ENCODE measurements at regions of chr4 and their contacts with region 1.

Region 1: GRCh38 chr4:142846729-142847596 is 862 bp upstream of the INPP4B start:
- DNase-seq: peak; percentile 78
- H3K4me3 ChIP-seq: peak overlapping the region; percentile 60
- H3K27ac ChIP-seq: no peak overlapping the region
- H3K4me1 ChIP-seq: no peaks in the 10 kb centered on the region
- H3K27me3 ChIP-seq: no peaks in the 10 kb centered on the region
- CTCF ChIP-seq: peak; percentile 36

Region 2: GRCh38 chr4:141860974-141861373 is 986.0 kb before region 1 on chr4:
- intact Hi-C with region 1: loop called (anchors 10 kb)
- DNase-seq: no peak
- H3K4me3 ChIP-seq: no peak overlapping the region
- H3K27ac ChIP-seq: no peak overlapping the region
- H3K4me1 ChIP-seq: no peaks in the 10 kb centered on the region
- H3K27me3 ChIP-seq: no peaks in the 10 kb centered on the region
- CTCF ChIP-seq: peak; percentile 22

Region 3: DNA sequence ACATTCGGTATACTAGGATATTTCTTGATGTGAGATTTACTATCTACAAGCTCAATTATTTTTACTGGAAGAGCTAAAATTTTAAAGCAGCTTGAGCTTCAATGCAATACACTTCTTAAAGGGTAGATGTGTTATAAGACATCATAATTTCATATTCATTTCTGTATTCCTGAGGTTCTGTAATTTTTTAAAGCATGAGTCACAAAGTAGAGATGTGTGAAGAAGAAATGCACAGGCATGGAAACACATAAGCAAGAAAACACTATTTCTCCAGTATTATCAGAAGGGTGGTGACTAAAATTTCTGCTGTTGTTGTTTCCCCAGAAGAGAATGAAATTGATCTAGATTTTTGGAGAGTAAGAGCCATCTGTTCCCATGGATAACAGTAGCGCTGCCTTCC is 73.5 kb before region 1 on chr4:
- intact Hi-C with region 1: no loop called
- DNase-seq: no peak
- H3K4me3 ChIP-seq: no peak overlapping the region
- H3K27ac ChIP-seq: no peak overlapping the region
- H3K4me1 ChIP-seq: no peaks in the 10 kb centered on the region
- H3K27me3 ChIP-seq: no peaks in the 10 kb centered on the region
- CTCF ChIP-seq: no peak